Left cardiac atrium (tissue), 4 donors: ENCODE measurements at regions of chr11 and their contacts with region 1.

Region 1: GRCh38 chr11:72722050-72722748 is 30.0 kb downstream of the ARAP1 start:
- DNase-seq: peak; percentile 90
- ATAC-seq: peak; percentile 86 to 87

Region 2: GRCh38 chr11:71551711-71552110 is 1170.5 kb before region 1 on chr11:
- intact Hi-C with region 1: no loop called
- DNase-seq: no peak
- ATAC-seq: no peak

Region 3: DNA sequence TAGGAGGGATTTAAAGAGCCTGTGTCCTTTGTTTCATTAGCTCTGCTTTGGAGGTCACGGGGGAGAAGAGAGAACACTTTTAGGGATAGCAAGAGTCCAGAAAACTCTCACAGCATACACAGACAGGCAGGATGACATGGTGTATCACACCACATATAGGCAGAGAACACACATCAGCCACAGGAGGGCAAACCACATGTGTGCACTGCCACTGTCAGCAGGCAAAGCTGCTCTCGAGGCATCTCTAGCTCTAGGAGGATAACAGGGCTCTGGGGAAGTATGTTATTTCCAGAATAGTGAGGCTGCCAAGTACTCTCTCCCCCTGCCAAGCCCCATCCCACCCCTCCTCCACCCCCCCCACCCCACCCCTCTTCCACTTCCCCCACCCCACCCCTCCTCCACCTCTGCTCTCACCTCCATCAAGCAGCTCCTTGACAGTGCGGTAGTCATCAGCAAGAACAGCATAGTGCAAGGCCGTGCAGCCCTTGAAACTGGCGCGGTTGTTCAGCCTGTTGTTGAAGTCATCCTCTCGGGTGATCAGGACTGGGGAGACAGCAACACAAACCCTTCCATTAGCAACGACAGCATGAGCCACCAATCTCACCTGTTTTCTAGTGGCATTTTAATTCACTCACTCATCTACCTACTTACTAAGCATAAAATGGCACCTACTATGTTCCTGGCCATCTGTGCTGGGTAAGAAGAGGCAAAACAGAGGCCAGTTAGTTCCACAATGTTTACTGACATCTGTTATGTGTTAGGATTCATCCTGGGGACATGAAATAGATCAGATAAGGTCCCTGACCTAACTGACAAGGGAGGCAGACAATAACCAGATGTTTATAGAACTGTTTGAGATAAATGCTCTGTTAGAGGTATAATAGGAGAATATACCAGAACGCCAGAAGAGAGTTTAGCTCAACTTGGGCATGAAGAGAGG is 363.5 kb before region 1 on chr11:
- intact Hi-C with region 1: no loop called
- DNase-seq: no peak
- ATAC-seq: no peak

Region 4: GRCh38 chr11:72793425-72794367 is 71.5 kb after region 1 on chr11 and contains the start of gene STARD10:
- intact Hi-C with region 1: loop called (anchors 1 to 5 kb)
- DNase-seq: peak; percentile 97
- ATAC-seq: peak; percentile 96 to 97
- total RNA-seq, gene STARD10: 87.4 to 93.9 TPM

Region 5: GRCh38 chr11:72814286-72815109 is 92.3 kb after region 1 on chr11 and contains the start of gene ATG16L2:
- intact Hi-C with region 1: loop called in 1 of 2 experiments (anchors 5 kb)
- DNase-seq: peak; percentile 89
- ATAC-seq: peak; percentile 95 to 96
- total RNA-seq, gene ATG16L2: 11.9 to 16.3 TPM

Region 6: DNA sequence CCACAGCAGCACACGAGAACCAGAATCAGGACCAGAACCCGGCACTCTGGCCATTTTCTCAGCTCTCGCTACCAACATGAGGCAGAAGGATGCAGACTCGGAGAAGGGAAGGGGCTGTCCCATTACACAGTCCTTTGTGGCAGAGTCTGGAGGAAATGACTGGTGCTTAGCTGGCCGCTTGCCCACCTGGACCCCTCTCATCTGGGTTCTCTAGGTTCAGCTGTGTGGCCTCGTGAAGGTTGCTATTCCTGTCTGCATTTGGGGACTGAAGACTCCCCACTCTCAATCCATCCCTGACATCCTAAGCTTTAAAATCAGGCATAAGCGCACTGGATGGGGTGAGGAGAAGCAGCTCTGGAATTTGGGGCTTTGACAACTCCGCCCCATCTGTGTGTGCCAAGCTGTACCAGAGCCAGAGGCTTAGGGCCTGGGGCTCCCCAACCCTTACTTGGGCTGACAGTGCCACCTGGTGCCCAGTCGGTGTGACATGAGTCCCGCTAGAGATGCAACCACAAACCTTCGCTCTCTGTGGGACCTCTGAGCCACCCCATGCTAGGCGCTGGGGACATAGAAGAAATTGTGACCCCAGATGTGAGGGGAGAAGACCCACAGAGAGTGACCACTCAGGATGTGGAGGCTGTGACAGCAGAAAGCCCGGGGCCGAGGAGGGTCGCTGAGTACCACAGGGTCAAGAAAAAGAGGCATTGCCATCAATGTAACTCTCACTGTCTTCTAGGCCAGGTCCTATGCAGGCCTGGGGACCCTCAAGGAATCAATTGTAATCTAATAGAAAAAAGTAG is 455.8 kb after region 1 on chr11:
- intact Hi-C with region 1: loop called (anchors 10 kb)
- DNase-seq: peak; percentile 90
- ATAC-seq: peak; percentile 83 to 84

Region 7: DNA sequence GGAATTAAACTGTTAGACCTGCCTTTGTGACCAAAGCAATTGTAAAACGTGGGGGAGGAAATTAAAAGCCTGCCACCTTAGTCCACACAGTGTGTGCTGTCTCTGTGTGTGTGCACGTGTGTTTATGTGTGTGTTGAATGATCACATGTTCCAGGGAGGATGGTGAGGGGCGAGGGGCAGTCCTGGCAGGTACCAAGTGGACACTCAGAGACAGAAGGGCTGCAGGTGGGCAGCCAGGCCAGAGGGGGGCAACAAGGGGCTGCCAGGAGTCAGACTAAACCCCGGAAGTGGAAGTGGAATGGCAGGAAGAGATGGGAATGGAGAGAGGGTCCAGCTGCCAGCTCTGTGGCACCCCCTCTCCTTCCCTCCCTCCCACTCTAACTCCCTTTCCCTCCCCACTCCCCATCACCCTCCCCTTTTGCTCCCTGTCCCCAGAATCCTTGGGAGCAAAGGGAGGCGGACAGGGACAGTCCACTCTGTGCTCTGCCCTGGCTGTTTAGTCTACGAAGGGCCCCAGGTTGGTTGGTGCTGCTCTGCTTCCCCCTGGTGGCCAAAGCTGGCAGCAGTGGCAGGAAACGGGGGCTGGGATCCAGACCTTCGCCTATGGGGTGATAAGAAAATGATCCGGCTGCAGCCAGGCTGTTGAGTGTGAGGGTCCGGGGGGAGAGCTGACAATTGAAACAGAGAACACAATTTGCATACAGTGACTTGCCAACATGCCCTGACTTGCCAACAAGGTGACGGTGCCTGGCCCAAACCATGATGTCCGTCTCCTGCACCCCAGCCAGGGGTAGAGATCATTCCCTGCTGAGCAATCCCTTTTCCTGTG is 520.3 kb after region 1 on chr11:
- intact Hi-C with region 1: loop called in 1 of 2 experiments (anchors 5 kb)
- DNase-seq: peak; percentile 83
- ATAC-seq: peak; percentile 66 to 83